B cell (primary cell): ENCODE measurements at regions of chr22 and their contacts with region 1.

Region 1: GRCh38 chr22:38705235-38706100 is at the start of gene GTPBP1:
- DNase-seq: peak; percentile 100
- ATAC-seq: peak; percentile 75
- H3K4me3 ChIP-seq: peak within 1 kb of the TSS; percentile 64 to 93 (median 88)
- H3K4me3 Mint-ChIP-seq: peak within 1 kb of the TSS; percentile 94
- H3K27ac ChIP-seq: peak within 1 kb of the TSS; percentile 83 to 91
- H3K27ac Mint-ChIP-seq: peak within 1 kb of the TSS; percentile 98
- H3K4me1 ChIP-seq: peaks cover 51 to 54% of the 10 kb centered on the region in 2 donors
- H3K4me1 Mint-ChIP-seq: peaks cover 65% of the 10 kb centered on the region
- H3K27me3 ChIP-seq: no peaks in the 10 kb centered on the region
- H3K27me3 Mint-ChIP-seq: no peaks in the 10 kb centered on the region
- CTCF ChIP-seq: peak; percentile 26
- total RNA-seq, gene GTPBP1: 174 and 175 TPM in 2 replicates

Region 2: DNA sequence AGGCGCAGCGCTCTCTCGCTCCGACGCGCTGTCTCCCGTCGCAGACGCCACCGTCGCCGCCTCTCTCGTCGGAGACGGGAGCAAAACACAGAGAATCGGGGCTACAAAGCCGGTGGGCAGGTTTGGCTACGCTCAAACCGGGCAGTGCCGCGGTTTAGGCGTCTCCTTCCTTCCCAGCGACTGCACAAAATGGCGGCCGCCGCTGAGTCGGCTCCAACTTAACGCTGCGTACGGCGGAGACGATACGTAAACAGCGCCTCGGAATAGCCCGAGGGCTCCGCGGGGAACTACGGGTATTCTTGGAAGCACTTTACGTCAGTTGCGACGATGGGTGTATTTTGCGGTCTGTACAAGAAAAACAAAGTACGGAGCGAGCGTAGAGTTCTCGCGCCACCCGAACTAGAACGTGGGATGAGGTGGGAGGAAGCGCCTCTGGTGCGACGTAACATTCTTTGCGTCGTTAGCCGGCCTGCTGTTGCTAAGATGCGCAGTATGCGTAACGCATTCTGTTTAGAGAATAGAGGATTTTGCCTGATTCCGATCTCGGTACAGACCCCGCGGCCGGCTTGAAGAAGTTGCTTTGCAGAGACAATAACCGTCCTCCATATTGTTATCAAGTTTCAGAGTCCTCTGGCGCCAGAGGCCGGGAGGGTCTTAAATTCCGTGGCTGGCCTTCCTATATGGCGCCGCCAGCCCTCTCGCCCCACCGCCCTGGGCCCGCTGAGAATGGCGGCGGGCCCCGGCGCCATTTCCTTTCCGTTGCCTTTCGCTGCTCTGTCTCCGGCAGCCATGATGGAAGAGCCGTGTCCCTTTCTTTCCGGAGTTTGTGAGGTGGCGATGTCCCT is 199.1 kb before region 1 on chr22 and contains the start of gene DDX17:
- CTCF ChIA-PET with region 1: no interaction called
- POLR2A ChIA-PET with region 1: no interaction called
- intact Hi-C with region 1: loop called (anchors 1 kb)
- DNase-seq: peak; percentile 99
- ATAC-seq: peak; percentile 87
- H3K4me3 ChIP-seq: peak within 1 kb of the TSS; percentile 78 to 99 (median 93)
- H3K4me3 Mint-ChIP-seq: peak within 1 kb of the TSS; percentile 99
- H3K27ac ChIP-seq: peak within 1 kb of the TSS; percentile 98
- H3K27ac Mint-ChIP-seq: peak within 1 kb of the TSS; percentile 100
- H3K4me1 ChIP-seq: peaks cover 39 to 40% of the 10 kb centered on the region in 2 donors
- H3K4me1 Mint-ChIP-seq: peaks cover 51% of the 10 kb centered on the region
- H3K27me3 ChIP-seq: no peaks in the 10 kb centered on the region
- H3K27me3 Mint-ChIP-seq: no peaks in the 10 kb centered on the region
- CTCF ChIP-seq: no peak
- total RNA-seq, gene DDX17: 936 and 967 TPM in 2 replicates

Region 3: GRCh38 chr22:38656256-38657044 is 49.0 kb before region 1 on chr22 and contains the starts of genes CBY1 and FAM227A:
- CTCF ChIA-PET with region 1: no interaction called
- POLR2A ChIA-PET with region 1: interaction called, 6 read pairs
- intact Hi-C with region 1: loop called (anchors 1 kb)
- DNase-seq: peak; percentile 93
- ATAC-seq: peak; percentile 83
- H3K4me3 ChIP-seq: peak within 1 kb of the TSS; percentile 79 to 89 (median 85)
- H3K4me3 Mint-ChIP-seq: peak within 1 kb of the TSS; percentile 94
- H3K27ac ChIP-seq: peak within 1 kb of the TSS; percentile 78 to 98
- H3K27ac Mint-ChIP-seq: peak within 1 kb of the TSS; percentile 99
- H3K4me1 ChIP-seq: peaks cover 13 to 15% of the 10 kb centered on the region in 2 donors
- H3K4me1 Mint-ChIP-seq: peaks cover 15% of the 10 kb centered on the region
- H3K27me3 ChIP-seq: no peaks in the 10 kb centered on the region
- H3K27me3 Mint-ChIP-seq: no peaks in the 10 kb centered on the region
- CTCF ChIP-seq: no peak
- total RNA-seq, gene CBY1: 20.7 and 21.7 TPM in 2 replicates
- total RNA-seq, gene FAM227A: 0.57 and 1.1 TPM in 2 replicates

Region 4: GRCh38 chr22:38681784-38682335 is 23.6 kb before region 1 on chr22 and contains the start of gene TOMM22:
- CTCF ChIA-PET with region 1: interaction called, 51 read pairs
- POLR2A ChIA-PET with region 1: interaction called, 9 read pairs
- intact Hi-C with region 1: loop called (anchors 1 kb)
- DNase-seq: peak; percentile 91
- ATAC-seq: peak; percentile 98
- H3K4me3 ChIP-seq: peak within 1 kb of the TSS; percentile 78 to 96 (median 87)
- H3K4me3 Mint-ChIP-seq: peak within 1 kb of the TSS; percentile 100
- H3K27ac ChIP-seq: peak within 1 kb of the TSS; percentile 70 to 88
- H3K27ac Mint-ChIP-seq: peak within 1 kb of the TSS; percentile 96
- H3K4me1 ChIP-seq: peaks cover 11 to 15% of the 10 kb centered on the region in 2 donors
- H3K4me1 Mint-ChIP-seq: peaks cover 22% of the 10 kb centered on the region
- H3K27me3 ChIP-seq: no peaks in the 10 kb centered on the region
- H3K27me3 Mint-ChIP-seq: no peaks in the 10 kb centered on the region
- CTCF ChIP-seq: peak; percentile 72
- total RNA-seq, gene TOMM22: 47.6 and 48.2 TPM in 2 replicates

Region 5: DNA sequence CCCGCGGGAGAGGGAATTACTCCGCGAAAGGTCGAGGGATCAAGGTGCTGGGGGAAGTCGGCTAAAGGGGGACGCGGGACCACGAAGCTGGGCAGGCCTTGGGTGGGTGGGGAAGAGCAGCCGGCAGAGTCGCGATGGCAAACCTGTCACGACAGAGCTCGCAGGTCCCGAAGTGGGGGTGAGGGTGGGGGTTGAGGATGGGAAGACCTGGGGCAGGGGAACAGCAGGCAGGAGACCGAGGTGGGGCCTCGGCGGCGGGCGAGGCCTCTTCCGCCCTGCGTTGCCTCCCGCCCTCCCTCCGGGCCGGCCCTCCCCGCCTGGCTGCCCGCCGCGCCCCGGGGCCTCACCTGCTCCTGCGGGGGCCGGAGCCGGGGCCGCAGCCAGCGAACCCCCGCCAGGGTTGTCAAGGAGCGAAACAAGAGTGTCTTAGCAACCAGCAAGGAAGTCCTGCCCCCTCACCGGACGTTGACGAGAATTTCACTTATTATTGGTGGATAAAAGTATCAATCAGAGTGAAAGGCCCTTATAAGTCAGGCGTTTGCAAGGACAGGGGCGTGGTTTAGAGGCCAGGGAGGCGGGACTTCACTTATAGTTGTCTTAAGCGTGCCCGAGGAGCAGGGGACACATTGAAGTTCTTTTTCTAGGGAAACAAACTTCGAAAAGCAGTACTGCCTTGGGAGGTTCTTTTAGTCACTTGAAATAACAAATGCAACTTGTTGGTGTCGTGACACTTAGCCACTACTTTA is 88.4 kb after region 1 on chr22 and contains the start of gene DNAL4:
- CTCF ChIA-PET with region 1: no interaction called
- POLR2A ChIA-PET with region 1: no interaction called
- intact Hi-C with region 1: loop called (anchors 1 kb)
- DNase-seq: peak; percentile 98
- ATAC-seq: peak; percentile 98
- H3K4me3 ChIP-seq: peak within 1 kb of the TSS; percentile 54 to 85 (median 66)
- H3K4me3 Mint-ChIP-seq: peak within 1 kb of the TSS; percentile 95
- H3K27ac ChIP-seq: peak within 1 kb of the TSS; percentile 47 to 85
- H3K27ac Mint-ChIP-seq: peak within 1 kb of the TSS; percentile 86
- H3K4me1 ChIP-seq: peaks cover 10 to 14% of the 10 kb centered on the region in 2 donors
- H3K4me1 Mint-ChIP-seq: peaks cover 19% of the 10 kb centered on the region
- H3K27me3 ChIP-seq: peaks cover 0 to 17% (median 4%) of the 10 kb centered on the region in 4 experiments
- H3K27me3 Mint-ChIP-seq: peaks cover 26% of the 10 kb centered on the region
- CTCF ChIP-seq: no peak
- total RNA-seq, gene DNAL4: 9.0 and 10.3 TPM in 2 replicates